Heart right ventricle (tissue), 16 donors: ENCODE measurements at regions of chr7 and their contacts with region 1.

Region 1: DNA sequence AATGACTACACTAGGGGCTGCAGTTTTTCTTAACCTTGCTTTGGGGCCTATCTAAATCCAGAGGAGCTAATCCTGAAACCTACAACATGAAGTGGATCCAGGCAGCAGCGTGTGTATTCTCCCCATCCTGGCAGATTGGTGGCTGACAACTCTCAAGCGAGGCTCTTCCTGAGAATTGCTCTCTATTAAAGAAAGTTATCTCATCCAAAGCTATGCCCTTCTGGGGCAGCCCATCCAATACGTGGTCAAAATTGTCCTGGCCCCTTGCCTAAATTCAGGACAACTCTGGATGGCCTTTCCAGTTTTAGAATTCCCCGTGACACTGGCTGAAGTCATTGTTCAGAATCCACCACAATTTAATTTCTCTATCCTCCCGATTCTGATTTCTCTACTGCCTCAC is 66.1 kb downstream of the IQUB start:
- DNase-seq: no peak
- ATAC-seq: peak in 3 of 8 donors; percentile 33 to 68 (median 49)
- H3K4me3 ChIP-seq: no peak overlapping the region
- H3K27ac ChIP-seq: no peak overlapping the region
- H3K4me1 ChIP-seq: peaks cover 0 to 4% (median 0%) of the 10 kb centered on the region in 9 donors
- H3K27me3 ChIP-seq: no peaks in the 10 kb centered on the region
- CTCF ChIP-seq: no peak

Region 2: GRCh38 chr7:123133924-123134323 is 334.4 kb before region 1 on chr7:
- intact Hi-C with region 1: no loop called
- DNase-seq: no peak
- ATAC-seq: no peak
- H3K4me3 ChIP-seq: no peak overlapping the region
- H3K27ac ChIP-seq: no peak overlapping the region
- H3K4me1 ChIP-seq: no peaks in the 10 kb centered on the region
- H3K27me3 ChIP-seq: no peaks in the 10 kb centered on the region
- CTCF ChIP-seq: no peak

Region 3: DNA sequence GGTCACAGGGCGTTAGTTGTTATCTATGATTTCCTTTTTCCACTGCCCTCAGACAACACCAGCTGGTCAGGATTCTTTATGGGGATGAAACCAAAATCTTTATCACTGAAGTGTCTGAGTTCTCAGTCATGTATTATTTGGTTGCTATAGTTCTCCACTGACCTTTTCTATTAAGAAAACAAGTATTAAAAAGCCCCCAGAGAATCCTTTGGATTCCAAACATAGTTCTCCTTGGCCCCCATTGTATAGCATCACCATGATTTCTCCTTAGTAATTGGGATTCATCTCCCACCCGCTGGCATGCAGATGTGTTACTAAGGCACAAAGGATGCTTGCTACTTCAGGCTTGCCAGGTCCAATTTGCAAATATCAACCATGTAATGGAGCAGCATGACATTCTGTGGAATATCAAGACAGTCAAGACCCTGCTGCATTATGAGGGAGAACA is 28.2 kb before region 1 on chr7:
- intact Hi-C with region 1: loop called in 1 of 10 experiments (anchors 2 kb)
- DNase-seq: no peak
- ATAC-seq: no peak
- H3K4me3 ChIP-seq: no peak overlapping the region
- H3K27ac ChIP-seq: no peak overlapping the region
- H3K4me1 ChIP-seq: no peaks in the 10 kb centered on the region
- H3K27me3 ChIP-seq: no peaks in the 10 kb centered on the region
- CTCF ChIP-seq: no peak

Region 4: DNA sequence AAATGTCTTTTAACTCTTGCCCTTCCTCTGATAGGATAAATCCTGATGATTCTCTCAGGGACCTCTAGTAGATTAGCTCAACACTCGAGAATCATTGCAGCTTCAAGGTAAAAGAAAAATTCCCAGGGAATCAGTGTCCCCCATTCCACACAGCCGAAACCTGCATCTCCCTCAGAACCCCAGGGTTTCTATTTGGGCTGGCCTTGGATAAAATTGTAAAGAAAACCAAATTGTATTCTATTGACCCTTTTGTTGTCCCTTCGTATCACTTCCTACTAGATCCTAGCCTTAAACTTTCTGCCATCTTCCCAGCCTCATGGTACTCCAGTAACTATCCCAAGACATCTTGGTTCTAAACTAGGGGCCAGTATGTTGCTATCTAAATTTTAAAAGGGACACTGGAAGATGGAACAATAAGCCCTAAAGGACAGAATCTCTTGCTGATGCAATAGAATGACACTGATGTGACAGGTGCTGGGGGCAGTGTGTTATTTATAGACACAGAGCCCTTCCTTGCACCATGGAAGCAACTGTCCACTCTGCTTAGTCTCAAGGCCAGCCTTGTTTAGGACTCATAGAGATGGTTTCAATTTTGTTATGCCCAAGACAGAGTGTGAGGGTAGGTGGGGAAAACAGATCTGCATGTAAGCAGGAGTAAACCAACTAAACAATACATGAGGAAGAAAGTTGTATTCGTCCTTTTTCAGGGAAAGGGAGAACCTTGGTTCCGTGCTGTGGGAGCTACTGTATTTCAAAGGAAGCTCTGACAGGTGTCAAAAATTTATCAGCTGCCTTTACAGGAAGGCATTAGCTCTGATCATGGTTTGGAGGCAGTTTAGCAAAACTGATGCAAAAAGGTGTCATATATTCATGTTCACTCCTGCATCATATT is 140.9 kb after region 1 on chr7:
- intact Hi-C with region 1: no loop called
- DNase-seq: no peak
- ATAC-seq: peak in 6 of 8 donors; percentile 58 to 88 (median 82)
- H3K4me3 ChIP-seq: no peak overlapping the region
- H3K27ac ChIP-seq: peak overlapping the region in 5 of 10 donors; percentile 16 to 66 (median 49)
- H3K4me1 ChIP-seq: peaks cover 0 to 42% (median 0%) of the 10 kb centered on the region in 9 donors
- H3K27me3 ChIP-seq: no peaks in the 10 kb centered on the region
- CTCF ChIP-seq: no peak